RWPE1 (cell line): ENCODE measurements at regions of chr4 and their contacts with region 1.

Region 1: DNA sequence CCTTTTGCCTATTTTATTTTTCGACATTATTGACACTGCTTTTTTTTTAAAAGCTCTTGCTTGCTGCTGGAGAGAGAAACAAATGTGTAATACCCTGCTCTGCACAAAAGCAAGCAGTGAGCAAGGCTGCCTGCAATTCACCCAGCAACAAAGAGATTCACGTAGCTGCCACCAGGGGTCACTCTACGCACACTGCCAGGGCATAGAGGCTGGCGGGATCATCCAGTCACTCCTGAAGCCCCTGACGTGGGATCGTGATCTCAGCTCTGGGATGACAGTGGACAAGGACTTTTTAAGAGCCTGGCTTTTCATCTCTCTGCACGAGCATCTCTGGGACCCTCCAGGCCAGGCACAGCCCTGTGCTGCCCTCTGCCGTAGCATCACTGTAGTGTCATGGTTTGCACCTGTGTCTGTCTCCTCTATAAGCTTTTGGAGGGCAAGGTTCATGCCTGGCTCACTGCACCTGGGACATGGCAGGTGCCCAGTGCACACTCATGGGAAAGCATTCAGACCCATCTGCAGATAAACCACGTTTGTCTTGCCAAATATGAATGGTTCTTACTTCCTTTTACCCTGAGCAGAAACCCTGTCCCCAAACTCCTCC is 19.8 kb downstream of the C4orf50 start:
- DNase-seq: peak; percentile 27
- H3K27ac ChIP-seq: no peak overlapping the region
- CTCF ChIP-seq: peak; percentile 85

Region 2: DNA sequence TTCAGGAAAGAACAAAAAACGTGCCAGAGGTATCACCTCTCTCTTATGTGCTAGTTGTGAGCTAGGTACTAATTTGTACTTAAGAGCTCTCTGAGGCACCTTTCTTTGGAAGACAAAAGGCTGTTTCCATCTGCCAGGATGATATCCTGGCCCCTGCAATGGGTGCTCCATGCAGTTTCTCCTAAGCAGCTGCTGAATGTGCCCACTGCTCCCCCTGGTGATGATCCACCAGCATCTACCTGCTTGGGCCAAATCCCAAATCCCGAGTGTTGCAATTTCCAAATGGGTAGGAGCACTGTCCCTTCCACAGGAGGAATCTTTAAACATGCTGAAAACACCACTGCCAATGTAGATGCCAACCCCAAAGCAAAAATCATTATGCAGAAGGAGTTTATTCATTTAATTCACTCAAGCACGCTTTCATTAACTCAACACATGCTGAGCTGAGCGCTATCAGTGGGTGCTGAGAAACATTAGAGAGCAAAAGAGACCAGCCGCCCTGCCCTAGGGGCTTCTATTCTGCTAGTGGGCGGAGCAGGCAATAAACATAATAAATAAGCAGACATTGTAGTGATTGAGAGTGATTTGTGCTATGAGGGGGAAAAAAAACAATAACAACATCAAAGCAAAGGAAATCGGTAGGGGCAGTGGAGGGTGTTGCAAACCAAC is 89.4 kb after region 1 on chr4:
- CTCF ChIA-PET with region 1: interaction called, 22 read pairs
- POLR2A ChIA-PET with region 1: no interaction called
- DNase-seq: peak; percentile 15
- H3K27ac ChIP-seq: no peak overlapping the region
- CTCF ChIP-seq: peak; percentile 19

Region 3: GRCh38 chr4:6298035-6298434 is 299.6 kb after region 1 on chr4:
- CTCF ChIA-PET with region 1: no interaction called
- POLR2A ChIA-PET with region 1: no interaction called
- DNase-seq: no peak
- H3K27ac ChIP-seq: no peak overlapping the region
- CTCF ChIP-seq: no peak